Calu3 (cell line): ENCODE measurements at regions of chr2 and their contacts with region 1.

Region 1: DNA sequence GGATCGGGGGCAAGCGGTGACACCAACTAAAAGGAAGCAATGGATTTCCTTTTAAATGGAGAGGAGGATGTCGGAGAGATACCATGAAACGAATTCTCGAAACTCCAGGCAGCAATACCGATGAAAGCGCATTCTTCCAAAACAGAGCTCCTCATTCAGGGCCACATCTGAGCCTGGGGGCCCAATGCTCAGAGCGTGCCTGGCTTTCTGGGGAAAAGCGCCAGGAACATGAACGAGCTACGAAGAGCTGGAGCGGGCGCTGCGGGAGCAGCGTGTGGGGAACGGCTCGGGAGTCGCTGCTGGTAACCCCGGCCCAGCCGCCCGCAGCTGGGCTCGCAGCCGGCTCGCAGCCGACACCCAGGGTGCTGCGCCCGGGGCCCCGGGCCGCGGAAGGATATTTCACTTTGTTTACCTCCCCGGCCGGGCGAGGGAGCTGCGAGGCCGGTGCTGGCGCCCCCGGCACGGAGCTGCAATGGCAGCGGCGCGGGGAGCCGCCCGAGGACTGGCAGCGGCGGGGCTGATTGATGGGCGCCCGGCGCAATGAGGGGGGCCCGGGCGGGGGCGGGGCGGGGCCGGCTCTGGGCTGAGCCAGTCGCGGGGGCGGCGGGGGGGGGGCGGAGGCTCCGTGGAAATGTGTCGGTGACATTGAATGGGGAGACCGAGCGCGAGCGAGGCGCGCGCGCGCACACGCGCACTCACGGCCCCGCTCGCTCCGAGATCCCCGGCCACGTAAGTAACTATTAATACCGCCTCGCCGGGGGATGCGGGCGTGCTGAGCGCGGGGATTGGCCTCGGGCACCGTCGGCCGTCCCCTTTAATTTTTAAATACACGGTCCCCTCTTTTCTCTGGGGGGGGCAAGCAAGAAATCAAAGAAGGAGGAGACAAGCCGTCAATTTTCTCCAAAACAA is at the start of gene TRIB2:
- DNase-seq: peak; percentile 82
- H3K4me3 Mint-ChIP-seq: peak within 1 kb of the TSS; percentile 73
- H3K27ac Mint-ChIP-seq: peak within 1 kb of the TSS; percentile 97
- H3K4me1 Mint-ChIP-seq: peaks cover 29% of the 10 kb centered on the region
- H3K27me3 Mint-ChIP-seq: peaks cover 18% of the 10 kb centered on the region
- CTCF ChIP-seq: no peak
- total RNA-seq, gene TRIB2: 6.2 and 6.4 TPM in 2 replicates

Region 2: GRCh38 chr2:11829947-11830707 is 886.4 kb before region 1 on chr2:
- CTCF ChIA-PET with region 1: interaction called, 26 read pairs
- intact Hi-C with region 1: loop called (anchors 1 kb)
- DNase-seq: peak; percentile 78
- H3K4me3 Mint-ChIP-seq: peak overlapping the region; percentile 55
- H3K27ac Mint-ChIP-seq: peak overlapping the region; percentile 55
- H3K4me1 Mint-ChIP-seq: peaks cover 10% of the 10 kb centered on the region
- H3K27me3 Mint-ChIP-seq: no peaks in the 10 kb centered on the region
- CTCF ChIP-seq: no peak

Region 3: DNA sequence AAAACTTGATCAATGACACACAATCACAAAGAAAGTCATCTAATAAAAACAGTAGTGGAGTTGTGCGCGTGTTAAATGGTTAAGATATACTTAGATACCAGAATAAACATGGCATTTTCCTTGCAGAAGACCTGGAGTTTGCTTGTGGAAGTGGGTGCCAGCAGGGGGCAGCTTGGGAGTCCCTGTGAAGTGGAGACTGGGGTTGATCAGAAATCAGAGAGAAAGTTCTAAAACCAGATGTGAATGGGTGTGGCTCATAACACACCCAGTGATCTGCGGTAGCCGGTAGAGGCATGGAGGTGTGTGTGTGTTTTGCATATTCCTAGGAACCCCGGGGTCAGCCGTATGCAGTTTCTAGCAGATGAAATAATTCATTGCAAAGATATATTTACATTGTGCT is 299.9 kb before region 1 on chr2:
- CTCF ChIA-PET with region 1: no interaction called
- intact Hi-C with region 1: no loop called
- DNase-seq: peak; percentile 21
- H3K4me3 Mint-ChIP-seq: no peak overlapping the region
- H3K27ac Mint-ChIP-seq: no peak overlapping the region
- H3K4me1 Mint-ChIP-seq: no peaks in the 10 kb centered on the region
- H3K27me3 Mint-ChIP-seq: no peaks in the 10 kb centered on the region
- CTCF ChIP-seq: no peak

Region 4: DNA sequence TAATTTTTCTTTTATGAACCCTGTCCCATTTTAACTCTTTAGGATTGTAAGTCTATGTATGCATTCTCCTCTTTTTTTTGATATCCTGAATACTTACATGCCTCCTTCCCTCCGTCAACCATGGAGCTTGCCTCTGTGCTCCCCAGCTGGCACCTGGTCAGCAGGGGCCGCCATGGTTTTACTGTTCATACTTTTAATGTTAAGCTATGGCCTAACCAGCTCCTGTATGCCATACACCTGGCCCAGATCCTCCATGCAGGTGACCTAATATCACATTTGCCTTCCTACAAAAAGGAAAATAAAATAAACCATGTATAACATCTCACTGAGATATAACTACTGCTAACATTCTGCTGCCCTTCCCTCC is 282.9 kb before region 1 on chr2:
- CTCF ChIA-PET with region 1: interaction called, 17 read pairs
- intact Hi-C with region 1: loop called (anchors 1 kb)
- DNase-seq: peak; percentile 19
- H3K4me3 Mint-ChIP-seq: no peak overlapping the region
- H3K27ac Mint-ChIP-seq: no peak overlapping the region
- H3K4me1 Mint-ChIP-seq: no peaks in the 10 kb centered on the region
- H3K27me3 Mint-ChIP-seq: no peaks in the 10 kb centered on the region
- CTCF ChIP-seq: no peak

Region 5: DNA sequence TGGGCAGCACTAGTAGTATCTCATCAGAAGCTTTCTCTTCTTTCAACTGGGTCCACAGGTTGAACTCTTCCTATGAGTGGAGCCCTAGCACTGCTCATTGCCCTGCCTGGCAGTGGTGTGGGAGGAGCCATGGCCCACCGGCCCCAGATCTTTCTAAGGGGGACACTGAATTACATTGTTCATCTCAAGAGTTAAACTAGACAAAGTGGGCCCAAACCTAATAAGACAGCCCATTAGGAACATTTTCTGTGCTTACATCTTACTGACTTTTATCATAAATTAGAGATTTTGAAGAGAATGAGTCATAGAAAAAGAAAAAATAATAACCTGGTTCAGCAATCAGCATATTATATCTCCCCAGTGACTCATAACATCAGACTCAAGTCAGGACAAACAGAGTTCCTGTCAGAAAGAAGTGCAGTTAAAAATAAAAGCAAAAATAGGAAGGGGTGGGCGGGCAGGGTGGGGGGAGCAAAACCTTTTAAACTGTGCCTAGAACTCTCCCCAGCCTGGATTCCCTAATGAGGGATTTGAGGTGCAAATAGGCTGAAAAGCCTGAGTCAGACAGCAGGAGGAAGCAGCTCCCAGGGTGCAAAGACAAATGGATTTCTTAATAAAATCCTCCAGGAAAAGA is 161.4 kb before region 1 on chr2:
- CTCF ChIA-PET with region 1: no interaction called
- intact Hi-C with region 1: loop called (anchors 5 kb)
- DNase-seq: no peak
- H3K4me3 Mint-ChIP-seq: no peak overlapping the region
- H3K27ac Mint-ChIP-seq: no peak overlapping the region
- H3K4me1 Mint-ChIP-seq: peaks cover 23% of the 10 kb centered on the region
- H3K27me3 Mint-ChIP-seq: no peaks in the 10 kb centered on the region
- CTCF ChIP-seq: no peak

Region 6: DNA sequence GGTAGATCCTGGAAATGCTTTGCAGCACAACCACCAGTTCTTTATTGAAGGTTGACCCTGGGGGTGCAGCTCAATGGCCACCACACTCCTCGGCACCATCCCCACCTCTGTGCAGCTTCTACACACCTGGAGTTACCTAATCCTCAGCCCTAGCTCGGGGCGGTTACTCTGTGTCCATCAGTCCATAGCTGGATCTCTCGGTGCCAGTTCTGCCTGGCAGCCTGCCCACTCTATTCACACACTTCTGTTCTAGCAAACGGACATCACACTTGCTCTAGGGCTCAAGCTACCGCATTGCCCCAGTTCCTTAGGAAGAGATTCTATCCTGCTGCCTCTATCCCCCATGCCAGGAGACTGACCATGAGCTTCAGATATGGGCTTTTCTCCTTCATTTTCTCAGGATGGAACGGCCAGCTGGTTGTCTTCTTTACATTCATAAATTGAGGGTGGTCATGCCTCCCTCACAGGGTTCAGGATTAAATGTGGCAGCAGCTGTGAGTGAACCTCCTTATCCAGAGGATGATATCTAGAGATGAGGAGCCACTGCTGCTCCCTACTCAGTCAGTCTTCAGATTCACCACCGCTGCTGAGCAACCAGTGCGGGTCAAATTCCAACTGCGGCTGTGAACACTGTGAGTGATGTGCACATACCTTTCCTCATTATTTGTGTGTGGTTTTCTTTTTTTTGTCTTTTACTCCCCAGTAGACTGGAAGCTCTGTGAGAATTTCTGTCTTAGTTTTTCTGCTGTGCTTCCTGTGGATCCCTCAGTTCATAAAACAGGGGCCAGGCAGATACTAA is 66.7 kb before region 1 on chr2:
- CTCF ChIA-PET with region 1: no interaction called
- intact Hi-C with region 1: no loop called
- DNase-seq: no peak
- H3K4me3 Mint-ChIP-seq: no peak overlapping the region
- H3K27ac Mint-ChIP-seq: no peak overlapping the region
- H3K4me1 Mint-ChIP-seq: no peaks in the 10 kb centered on the region
- H3K27me3 Mint-ChIP-seq: peaks cover 20% of the 10 kb centered on the region
- CTCF ChIP-seq: no peak

Region 7: GRCh38 chr2:12675352-12675795 is 41.2 kb before region 1 on chr2:
- CTCF ChIA-PET with region 1: interaction called, 11 read pairs
- intact Hi-C with region 1: loop called (anchors 1 kb)
- DNase-seq: peak; percentile 41
- H3K4me3 Mint-ChIP-seq: peak overlapping the region; percentile 36
- H3K27ac Mint-ChIP-seq: peak overlapping the region; percentile 59
- H3K4me1 Mint-ChIP-seq: peaks cover 20% of the 10 kb centered on the region
- H3K27me3 Mint-ChIP-seq: no peaks in the 10 kb centered on the region
- CTCF ChIP-seq: no peak

Region 8: DNA sequence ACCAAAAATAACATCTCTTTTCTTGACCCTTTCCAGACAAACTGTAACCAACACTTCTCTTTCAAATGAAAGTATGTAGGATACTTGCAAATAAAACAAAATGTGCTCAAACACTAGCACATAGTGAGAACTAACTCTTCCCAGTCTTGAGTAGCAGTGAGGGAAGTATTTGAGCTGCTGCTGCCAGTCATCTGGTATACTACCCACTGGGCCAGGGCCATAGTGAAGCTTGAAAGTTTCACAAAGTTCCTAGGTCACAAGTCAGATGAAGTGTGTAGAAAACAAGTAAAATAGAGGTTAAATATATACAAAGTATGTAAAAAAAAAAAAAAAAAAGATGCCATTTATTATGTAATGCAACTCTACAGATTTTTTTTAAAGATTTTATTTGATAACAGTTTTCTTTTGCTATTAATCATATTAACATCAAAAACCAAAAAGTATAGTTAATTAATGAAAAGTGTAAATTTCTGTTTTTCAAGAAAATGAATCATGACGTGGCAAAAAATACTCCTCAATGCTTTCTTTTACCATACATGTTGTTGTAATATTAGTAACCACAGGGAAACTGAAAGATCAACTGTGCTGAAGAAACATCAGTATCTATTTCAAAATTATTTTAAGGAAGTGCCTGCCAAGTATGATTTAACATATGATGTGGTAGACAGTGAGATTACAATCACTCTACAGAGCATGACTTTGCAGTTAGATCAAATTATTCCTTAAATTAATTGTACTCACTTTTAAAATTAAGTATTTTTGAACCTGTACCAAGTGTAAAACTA is 21.4 kb before region 1 on chr2:
- CTCF ChIA-PET with region 1: no interaction called
- intact Hi-C with region 1: no loop called
- DNase-seq: no peak
- H3K4me3 Mint-ChIP-seq: no peak overlapping the region
- H3K27ac Mint-ChIP-seq: no peak overlapping the region
- H3K4me1 Mint-ChIP-seq: peaks cover 32% of the 10 kb centered on the region
- H3K27me3 Mint-ChIP-seq: no peaks in the 10 kb centered on the region
- CTCF ChIP-seq: no peak

Region 9: DNA sequence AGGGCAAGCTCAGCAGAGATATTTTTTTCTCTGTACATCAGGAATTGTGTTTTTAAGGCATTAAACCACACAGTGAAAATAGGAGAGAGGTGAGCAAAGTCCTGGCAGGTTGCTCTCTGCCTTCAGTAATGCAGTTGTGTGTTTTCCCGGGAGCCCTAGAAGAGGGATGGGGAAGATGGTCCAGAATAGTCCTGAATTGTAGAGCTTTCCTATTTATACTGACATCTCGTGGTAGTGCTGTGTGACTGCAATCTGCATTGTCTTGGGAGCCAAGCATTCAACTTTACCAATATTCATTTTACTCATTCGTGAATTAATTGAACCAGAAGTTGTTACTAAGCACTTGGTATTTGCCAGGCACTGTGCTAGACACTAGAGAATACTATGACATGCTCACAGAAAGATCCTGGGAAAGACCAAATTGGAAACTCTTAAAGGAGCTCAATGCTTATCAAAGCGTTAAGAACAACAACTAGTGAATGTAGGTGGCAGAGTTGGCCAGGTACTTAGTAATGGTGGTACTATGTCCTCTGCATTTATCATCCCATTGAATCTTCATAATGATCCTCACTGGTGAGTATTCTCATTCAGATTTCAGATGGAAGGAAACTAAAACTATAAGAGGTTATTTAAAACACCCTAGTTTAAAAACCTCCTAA is 214.8 kb after region 1 on chr2:
- CTCF ChIA-PET with region 1: interaction called, 6 read pairs
- intact Hi-C with region 1: loop called (anchors 5 kb)
- DNase-seq: peak; percentile 7
- H3K4me3 Mint-ChIP-seq: no peak overlapping the region
- H3K27ac Mint-ChIP-seq: no peak overlapping the region
- H3K4me1 Mint-ChIP-seq: no peaks in the 10 kb centered on the region
- H3K27me3 Mint-ChIP-seq: no peaks in the 10 kb centered on the region
- CTCF ChIP-seq: peak; percentile 44

Region 10: DNA sequence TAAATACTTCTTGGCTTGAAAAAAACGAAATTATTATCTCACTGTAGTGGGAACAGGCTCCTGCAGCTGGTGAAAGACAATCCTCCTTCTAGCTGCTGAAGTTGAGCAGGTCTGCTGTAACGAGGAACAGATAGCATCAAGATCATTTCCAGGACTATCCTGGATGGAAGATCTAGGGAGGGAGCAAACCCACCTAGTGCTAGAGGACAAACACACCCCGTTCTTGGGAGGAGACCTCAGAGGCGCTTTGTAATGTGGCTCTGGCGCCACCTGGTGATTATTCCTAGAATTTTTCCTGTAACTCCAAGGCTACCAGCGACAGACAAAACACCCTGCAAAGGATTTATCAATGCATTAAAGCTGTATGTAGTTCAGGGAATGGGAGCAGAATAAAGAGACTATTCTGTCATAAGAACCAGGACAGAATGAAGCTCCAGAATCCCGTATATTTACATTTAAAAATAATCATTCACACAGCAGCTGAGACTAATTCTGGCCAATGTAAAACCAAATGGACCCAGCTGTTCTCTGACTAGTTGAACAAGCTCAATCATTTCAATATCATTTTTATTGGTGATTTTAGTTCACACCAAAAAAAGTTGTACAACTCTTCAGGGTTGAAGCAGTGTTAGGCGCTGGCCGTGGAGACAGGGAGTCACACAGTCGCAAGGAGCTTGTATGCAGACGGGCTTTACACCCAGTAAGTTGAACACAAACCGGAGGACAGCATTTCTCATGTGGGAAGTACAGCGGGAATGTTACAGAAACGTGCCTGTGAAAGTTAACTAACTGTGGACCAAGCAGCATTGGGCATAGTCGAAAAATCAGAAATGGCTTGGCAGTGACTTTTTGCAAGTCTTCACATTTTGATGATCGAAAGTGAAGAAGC is 290.5 kb after region 1 on chr2:
- CTCF ChIA-PET with region 1: no interaction called
- intact Hi-C with region 1: loop called (anchors 5 kb)
- DNase-seq: peak; percentile 68
- H3K4me3 Mint-ChIP-seq: no peak overlapping the region
- H3K27ac Mint-ChIP-seq: no peak overlapping the region
- H3K4me1 Mint-ChIP-seq: no peaks in the 10 kb centered on the region
- H3K27me3 Mint-ChIP-seq: no peaks in the 10 kb centered on the region
- CTCF ChIP-seq: peak; percentile 86

Region 11: DNA sequence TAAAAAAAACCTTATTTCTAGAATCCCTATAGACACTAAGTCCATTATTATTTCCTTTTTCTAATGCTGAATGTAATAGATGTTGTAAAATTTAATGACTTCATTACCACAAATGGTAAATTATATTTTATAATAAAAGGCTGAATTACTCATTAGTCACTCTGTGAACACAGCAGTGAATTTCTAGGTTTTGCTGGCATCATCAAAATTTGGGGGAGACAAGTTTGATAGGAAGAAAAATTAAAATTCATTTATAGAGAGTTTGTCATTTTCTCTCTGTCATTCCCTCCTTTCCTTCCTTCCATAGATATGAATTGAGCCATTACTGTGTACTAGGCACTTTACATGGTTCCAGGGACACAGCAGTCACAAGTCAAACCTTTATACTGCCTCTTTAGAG is 341.1 kb after region 1 on chr2:
- CTCF ChIA-PET with region 1: no interaction called
- intact Hi-C with region 1: no loop called
- DNase-seq: no peak
- H3K4me3 Mint-ChIP-seq: no peak overlapping the region
- H3K27ac Mint-ChIP-seq: no peak overlapping the region
- H3K4me1 Mint-ChIP-seq: no peaks in the 10 kb centered on the region
- H3K27me3 Mint-ChIP-seq: no peaks in the 10 kb centered on the region
- CTCF ChIP-seq: no peak